Endothelial cell of umbilical vein (primary cell): ENCODE measurements at regions of chr2 and their contacts with region 1.

Region 1: DNA sequence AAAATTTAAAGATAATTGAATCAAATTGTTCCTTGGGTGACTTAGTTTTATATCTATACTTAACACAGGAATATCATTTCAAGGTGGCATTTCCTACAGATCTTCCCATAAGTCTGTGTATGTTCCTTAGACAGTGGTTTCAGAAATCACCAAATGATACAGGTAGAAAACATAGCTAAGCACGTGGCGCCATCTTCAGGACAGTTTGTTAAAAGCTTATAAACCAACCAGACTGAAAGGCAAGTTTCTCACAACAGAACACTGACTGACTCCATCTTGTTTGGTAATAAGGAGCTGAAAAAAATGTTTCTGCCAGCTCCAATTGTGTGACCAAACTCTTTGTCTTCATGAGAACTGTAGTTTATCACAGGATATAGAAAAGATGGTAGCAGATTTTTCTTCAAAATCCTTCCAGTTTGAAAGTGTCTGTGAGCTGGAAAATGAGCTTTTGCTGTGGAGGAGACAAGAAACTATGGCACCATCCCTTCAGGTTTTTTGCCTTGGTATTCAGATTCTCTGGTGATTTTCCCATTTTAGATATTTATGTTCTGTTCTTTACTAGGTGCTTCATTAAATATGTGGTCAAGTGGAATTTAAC is 34.8 kb upstream of the NEUROD1 start:
- DNase-seq: peak; percentile 81
- H3K4me3 ChIP-seq: no peak overlapping the region
- H3K27ac ChIP-seq: no peak overlapping the region
- H3K4me1 ChIP-seq: no peaks in the 10 kb centered on the region
- H3K27me3 ChIP-seq: peaks cover 2 to 12% of the 10 kb centered on the region in 2 experiments
- CTCF ChIP-seq: peak; percentile 48 to 54
- POLR2A ChIP-seq: no peak

Region 2: GRCh38 chr2:181077128-181077709 is 637.9 kb before region 1 on chr2:
- CTCF ChIA-PET with region 1: interaction called, 12 read pairs
- POLR2A ChIA-PET with region 1: no interaction called
- dilution Hi-C with region 1: no loop called
- intact Hi-C with region 1: loop called (anchors 1 kb)
- DNase-seq: peak; percentile 56
- H3K4me3 ChIP-seq: no peak overlapping the region
- H3K27ac ChIP-seq: no peak overlapping the region
- H3K4me1 ChIP-seq: peaks cover 21% of the 10 kb centered on the region
- H3K27me3 ChIP-seq: no peaks in the 10 kb centered on the region
- CTCF ChIP-seq: peak; percentile 38 to 47
- POLR2A ChIP-seq: no peak

Region 3: DNA sequence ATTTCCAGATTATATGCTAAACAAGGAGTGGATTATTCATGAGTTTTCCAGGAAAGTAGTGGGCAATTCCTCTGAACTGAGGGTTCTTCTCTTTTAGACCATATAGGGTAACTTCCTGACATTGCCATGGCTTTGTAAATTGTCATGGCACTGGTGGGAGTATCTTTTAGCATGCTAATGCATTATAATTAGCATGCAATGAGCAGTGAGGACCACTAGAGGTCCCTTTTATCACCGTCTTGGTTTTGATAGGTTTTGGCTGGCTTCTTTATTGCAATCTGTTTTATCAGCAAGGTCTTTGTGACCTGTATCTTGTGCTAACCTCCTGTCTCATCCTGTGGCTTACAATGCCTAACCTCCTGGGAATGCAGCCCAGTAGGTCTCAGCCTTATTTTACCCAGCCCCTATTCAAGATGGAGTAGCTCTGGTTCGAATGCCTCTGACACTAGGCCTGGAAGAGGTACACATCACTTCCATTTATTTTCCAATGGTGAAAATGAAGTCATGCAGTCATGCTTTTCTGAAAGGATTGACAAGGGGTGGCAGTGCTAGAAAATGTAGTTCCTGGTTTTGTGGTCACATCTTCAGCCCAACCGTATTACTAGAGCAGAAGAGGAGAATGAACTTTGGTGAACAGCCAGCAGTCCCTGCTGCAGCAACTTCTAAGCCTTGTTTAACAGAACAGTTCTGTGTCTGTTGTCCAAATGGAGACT is 284.6 kb before region 1 on chr2:
- CTCF ChIA-PET with region 1: interaction called, 17 read pairs
- POLR2A ChIA-PET with region 1: no interaction called
- dilution Hi-C with region 1: no loop called
- intact Hi-C with region 1: no loop called
- DNase-seq: peak; percentile 13
- H3K4me3 ChIP-seq: no peak overlapping the region
- H3K27ac ChIP-seq: no peak overlapping the region
- H3K4me1 ChIP-seq: no peaks in the 10 kb centered on the region
- H3K27me3 ChIP-seq: no peaks in the 10 kb centered on the region
- CTCF ChIP-seq: peak; percentile 30 to 33
- POLR2A ChIP-seq: no peak

Region 4: GRCh38 chr2:181573140-181573736 is 141.9 kb before region 1 on chr2:
- CTCF ChIA-PET with region 1: interaction called, 107 read pairs
- POLR2A ChIA-PET with region 1: no interaction called
- dilution Hi-C with region 1: no loop called
- intact Hi-C with region 1: loop called (anchors 1 kb)
- DNase-seq: peak; percentile 38
- H3K4me3 ChIP-seq: no peak overlapping the region
- H3K27ac ChIP-seq: no peak overlapping the region
- H3K4me1 ChIP-seq: no peaks in the 10 kb centered on the region
- H3K27me3 ChIP-seq: peaks cover 4 to 12% of the 10 kb centered on the region in 2 experiments
- CTCF ChIP-seq: peak; percentile 18 to 31
- POLR2A ChIP-seq: no peak

Region 5: DNA sequence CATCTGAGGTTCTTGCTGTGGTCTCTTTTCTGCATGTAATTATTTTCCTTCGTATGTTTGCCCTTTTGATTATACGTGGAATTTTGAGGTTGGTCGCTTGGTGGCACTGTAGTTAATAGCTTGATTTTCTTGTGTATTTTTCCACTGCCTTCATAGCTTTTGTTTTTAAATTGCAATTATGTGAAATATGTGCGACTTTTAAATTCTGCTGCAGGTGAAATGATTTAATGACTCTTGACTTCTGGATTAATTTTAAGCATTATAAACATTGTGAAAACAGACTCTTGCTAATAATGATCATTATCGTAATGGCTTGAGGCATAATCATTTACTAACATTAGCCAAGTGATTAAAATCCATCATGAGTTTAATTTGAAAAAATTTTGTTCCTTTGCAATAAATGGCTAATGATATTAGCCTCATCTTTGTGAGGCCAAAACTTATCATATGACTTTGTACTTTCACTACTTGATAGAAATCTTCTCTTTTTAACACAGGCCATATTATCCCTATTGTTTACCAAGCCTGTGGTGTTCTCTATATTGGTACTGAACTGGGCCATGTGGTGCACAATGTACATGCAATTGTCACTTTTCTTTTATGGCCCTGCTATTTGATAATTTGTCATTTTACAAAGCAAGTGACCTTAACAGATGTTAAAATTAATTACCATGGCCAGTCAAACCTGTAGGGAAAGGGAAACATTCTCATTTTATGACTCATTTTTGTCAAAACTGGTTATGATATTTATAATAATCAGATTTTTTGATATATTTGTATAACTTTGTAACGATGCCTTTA is 28.0 kb after region 1 on chr2:
- CTCF ChIA-PET with region 1: interaction called, 18 read pairs
- POLR2A ChIA-PET with region 1: no interaction called
- dilution Hi-C with region 1: no loop called
- intact Hi-C with region 1: no loop called
- DNase-seq: peak; percentile 83
- H3K4me3 ChIP-seq: no peak overlapping the region
- H3K27ac ChIP-seq: peak overlapping the region; percentile 34
- H3K4me1 ChIP-seq: peaks cover 15% of the 10 kb centered on the region
- H3K27me3 ChIP-seq: no peaks in the 10 kb centered on the region
- CTCF ChIP-seq: peak; percentile 37 to 39
- POLR2A ChIP-seq: no peak

Region 6: DNA sequence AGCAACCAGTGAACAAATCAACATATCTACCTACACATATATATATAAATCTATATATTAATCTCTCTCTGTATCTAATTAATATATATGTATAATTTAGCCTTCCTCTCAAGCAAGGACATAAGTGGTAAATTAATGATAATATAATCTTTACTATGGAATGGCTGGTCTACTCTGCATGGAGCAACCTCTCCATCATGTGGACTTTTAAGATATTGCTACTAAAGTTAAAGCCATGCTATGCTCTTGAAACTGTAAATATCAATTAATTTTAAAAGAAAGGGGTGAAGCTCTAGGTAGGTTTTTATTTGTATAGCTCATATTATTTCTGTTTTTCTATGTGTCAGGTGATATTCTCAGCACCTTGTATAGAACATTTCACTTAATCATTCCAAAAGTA is 417.5 kb after region 1 on chr2:
- CTCF ChIA-PET with region 1: interaction called, 28 read pairs
- POLR2A ChIA-PET with region 1: no interaction called
- dilution Hi-C with region 1: no loop called
- intact Hi-C with region 1: no loop called
- DNase-seq: peak; percentile 65
- H3K4me3 ChIP-seq: no peak overlapping the region
- H3K27ac ChIP-seq: peak overlapping the region; percentile 83
- H3K4me1 ChIP-seq: peaks cover 29% of the 10 kb centered on the region
- H3K27me3 ChIP-seq: no peaks in the 10 kb centered on the region
- CTCF ChIP-seq: peak in 1 of 2 donors; percentile 25
- POLR2A ChIP-seq: no peak